B cell (primary cell): ENCODE measurements at regions of chr11 and their contacts with region 1.

Region 1: GRCh38 chr11:65013692-65014145 is 241 bp upstream of the ARL2 start:
- DNase-seq: peak; percentile 96
- ATAC-seq: peak; percentile 80
- H3K4me3 ChIP-seq: peak overlapping the region; percentile 17 to 92 (median 83)
- H3K4me3 Mint-ChIP-seq: peak overlapping the region; percentile 92
- H3K27ac ChIP-seq: peak overlapping the region; percentile 93 to 98
- H3K27ac Mint-ChIP-seq: peak overlapping the region; percentile 98
- H3K4me1 ChIP-seq: peaks cover 9 to 35% of the 10 kb centered on the region in 2 donors
- H3K4me1 Mint-ChIP-seq: peaks cover 23% of the 10 kb centered on the region
- H3K27me3 ChIP-seq: no peaks in the 10 kb centered on the region
- H3K27me3 Mint-ChIP-seq: no peaks in the 10 kb centered on the region
- CTCF ChIP-seq: no peak

Region 2: DNA sequence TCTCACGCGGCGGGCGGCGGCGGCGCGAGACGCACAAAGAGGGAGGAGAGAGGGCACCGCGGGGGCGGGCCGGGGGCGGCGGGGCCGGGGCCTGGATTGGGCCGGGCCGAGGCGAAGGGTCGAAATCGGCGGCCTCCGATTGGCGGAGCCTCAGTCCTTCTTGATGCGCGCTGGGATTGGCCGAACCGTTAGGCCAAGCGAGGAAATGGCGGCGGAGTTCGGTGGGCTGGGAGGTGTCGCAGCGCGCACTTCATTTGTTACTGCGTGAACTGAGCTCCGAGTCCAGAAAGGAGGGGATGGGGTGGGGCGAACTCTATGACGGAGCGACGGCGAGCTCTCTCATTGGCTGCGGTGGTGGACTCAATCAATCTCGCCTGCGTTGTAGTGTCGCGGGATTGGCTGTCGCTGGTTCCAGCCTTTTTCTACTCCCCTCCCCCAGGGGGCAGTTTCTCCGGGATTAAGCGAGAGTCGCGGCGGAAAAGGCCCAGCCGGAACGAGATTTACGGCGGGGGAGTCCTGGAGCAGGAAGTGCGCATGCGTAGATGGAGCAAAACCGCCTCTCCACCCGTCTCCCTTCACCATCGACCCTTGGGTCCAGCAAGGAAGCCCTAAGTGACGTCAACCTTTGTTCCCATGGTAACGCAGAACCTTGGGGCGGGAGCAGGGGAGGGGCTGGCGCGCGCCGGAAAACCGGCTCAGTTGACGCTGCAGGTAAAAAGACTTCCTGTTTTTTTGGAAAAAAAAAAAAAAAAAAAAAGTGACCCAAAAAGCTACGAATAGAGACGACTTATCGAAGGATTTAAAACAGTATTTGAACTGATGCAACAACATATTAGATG is 235.0 kb before region 1 on chr11 and contains the start of gene SF1:
- CTCF ChIA-PET with region 1: no interaction called
- POLR2A ChIA-PET with region 1: no interaction called
- intact Hi-C with region 1: loop called (anchors 5 kb)
- DNase-seq: peak; percentile 100
- ATAC-seq: peak; percentile 82
- H3K4me3 ChIP-seq: peak within 1 kb of the TSS; percentile 79 to 92 (median 82)
- H3K4me3 Mint-ChIP-seq: peak within 1 kb of the TSS; percentile 95
- H3K27ac ChIP-seq: peak within 1 kb of the TSS; percentile 95 to 98
- H3K27ac Mint-ChIP-seq: peak within 1 kb of the TSS; percentile 99
- H3K4me1 ChIP-seq: peaks cover 60 to 71% of the 10 kb centered on the region in 2 donors
- H3K4me1 Mint-ChIP-seq: peaks cover 73% of the 10 kb centered on the region
- H3K27me3 ChIP-seq: no peaks in the 10 kb centered on the region
- H3K27me3 Mint-ChIP-seq: no peaks in the 10 kb centered on the region
- CTCF ChIP-seq: no peak
- total RNA-seq, gene SF1: 914 and 931 TPM in 2 replicates

Region 3: GRCh38 chr11:64856382-64857227 is 157.1 kb before region 1 on chr11:
- CTCF ChIA-PET with region 1: no interaction called
- POLR2A ChIA-PET with region 1: no interaction called
- intact Hi-C with region 1: no loop called
- DNase-seq: peak; percentile 38
- ATAC-seq: no peak
- H3K4me3 ChIP-seq: no peak overlapping the region
- H3K4me3 Mint-ChIP-seq: peak overlapping the region; percentile 45
- H3K27ac ChIP-seq: peak overlapping the region; percentile 32 to 100
- H3K27ac Mint-ChIP-seq: peak overlapping the region; percentile 65
- H3K4me1 ChIP-seq: peaks cover 98 to 100% of the 10 kb centered on the region in 2 donors
- H3K4me1 Mint-ChIP-seq: peaks cover 86% of the 10 kb centered on the region
- H3K27me3 ChIP-seq: no peaks in the 10 kb centered on the region
- H3K27me3 Mint-ChIP-seq: no peaks in the 10 kb centered on the region
- CTCF ChIP-seq: no peak

Region 4: GRCh38 chr11:64924102-64924851 is 89.4 kb before region 1 on chr11 and contains the start of gene PPP2R5B:
- CTCF ChIA-PET with region 1: interaction called, 3 read pairs
- POLR2A ChIA-PET with region 1: interaction called, 3 read pairs
- intact Hi-C with region 1: loop called (anchors 1 kb)
- DNase-seq: peak; percentile 92
- ATAC-seq: peak; percentile 94
- H3K4me3 ChIP-seq: peak within 1 kb of the TSS; percentile 58 to 76 (median 69)
- H3K4me3 Mint-ChIP-seq: peak within 1 kb of the TSS; percentile 97
- H3K27ac ChIP-seq: peak within 1 kb of the TSS; percentile 69 to 81
- H3K27ac Mint-ChIP-seq: peak within 1 kb of the TSS; percentile 97
- H3K4me1 ChIP-seq: peaks cover 14 to 33% of the 10 kb centered on the region in 2 donors
- H3K4me1 Mint-ChIP-seq: peaks cover 22% of the 10 kb centered on the region
- H3K27me3 ChIP-seq: no peaks in the 10 kb centered on the region
- H3K27me3 Mint-ChIP-seq: no peaks in the 10 kb centered on the region
- CTCF ChIP-seq: no peak
- total RNA-seq, gene PPP2R5B: 22.6 and 24.2 TPM in 2 replicates

Region 5: DNA sequence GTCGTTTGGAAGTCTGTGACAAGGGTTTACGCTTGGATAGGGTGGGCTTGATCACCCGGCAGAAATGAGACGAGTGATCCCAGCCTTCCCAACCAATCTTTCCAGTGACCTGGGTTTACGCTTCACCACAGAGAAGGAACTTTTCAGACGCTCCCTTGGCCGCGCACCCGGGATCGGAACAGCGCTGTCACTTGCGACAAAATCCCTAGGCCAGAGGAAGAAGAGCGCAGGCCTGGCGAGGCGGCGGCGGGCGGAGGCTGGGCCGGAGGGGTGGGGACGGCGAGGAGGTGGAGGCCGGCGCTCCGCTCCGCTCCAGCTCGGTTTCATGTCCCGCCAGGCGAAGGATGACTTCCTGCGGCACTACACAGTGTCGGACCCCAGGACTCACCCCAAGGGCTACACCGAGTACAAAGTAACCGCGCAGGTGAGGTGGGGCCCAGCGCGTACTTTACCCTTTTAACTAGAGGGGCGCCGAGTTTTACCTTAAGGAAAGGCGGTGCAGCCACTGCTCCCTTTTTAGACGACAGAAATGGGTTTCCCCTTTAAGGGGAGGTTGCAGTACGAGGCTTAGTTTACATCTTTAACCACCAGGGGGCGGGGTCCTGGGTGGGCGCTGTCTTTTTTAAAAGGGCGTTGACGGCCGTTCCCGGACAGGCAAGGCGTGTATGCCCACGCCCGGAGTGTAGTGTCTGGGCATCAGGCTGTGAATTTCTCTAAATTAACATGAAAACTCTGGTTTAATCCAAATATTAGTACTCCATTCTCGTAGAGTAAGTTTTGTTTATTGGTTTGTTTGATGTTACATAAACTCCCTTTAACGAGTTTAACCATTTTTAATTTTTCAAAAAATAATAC is 13.7 kb after region 1 on chr11 and contains the start of gene SNX15:
- CTCF ChIA-PET with region 1: interaction called, 36 read pairs
- POLR2A ChIA-PET with region 1: interaction called, 3 read pairs
- intact Hi-C with region 1: loop called (anchors 1 kb)
- DNase-seq: peak; percentile 96
- ATAC-seq: peak; percentile 88
- H3K4me3 ChIP-seq: peak within 1 kb of the TSS; percentile 43 to 63 (median 53)
- H3K4me3 Mint-ChIP-seq: peak within 1 kb of the TSS; percentile 93
- H3K27ac ChIP-seq: peak within 1 kb of the TSS; percentile 55 to 73
- H3K27ac Mint-ChIP-seq: peak within 1 kb of the TSS; percentile 93
- H3K4me1 ChIP-seq: peaks cover 11 to 19% of the 10 kb centered on the region in 2 donors
- H3K4me1 Mint-ChIP-seq: peaks cover 17% of the 10 kb centered on the region
- H3K27me3 ChIP-seq: no peaks in the 10 kb centered on the region
- H3K27me3 Mint-ChIP-seq: no peaks in the 10 kb centered on the region
- CTCF ChIP-seq: peak; percentile 90
- total RNA-seq, gene SNX15: 28.5 and 30.4 TPM in 2 replicates

Region 6: GRCh38 chr11:65083834-65084597 is 70.3 kb after region 1 on chr11 and contains the starts of genes CDCA5 and ZFPL1:
- CTCF ChIA-PET with region 1: no interaction called
- POLR2A ChIA-PET with region 1: no interaction called
- intact Hi-C with region 1: loop called (anchors 1 kb)
- DNase-seq: peak; percentile 98
- ATAC-seq: peak; percentile 87
- H3K4me3 ChIP-seq: peak within 1 kb of the TSS; percentile 61 to 81 (median 76)
- H3K4me3 Mint-ChIP-seq: peak within 1 kb of the TSS; percentile 98
- H3K27ac ChIP-seq: peak within 1 kb of the TSS; percentile 91 to 94
- H3K27ac Mint-ChIP-seq: peak within 1 kb of the TSS; percentile 100
- H3K4me1 ChIP-seq: peaks cover 12 to 19% of the 10 kb centered on the region in 2 donors
- H3K4me1 Mint-ChIP-seq: peaks cover 28% of the 10 kb centered on the region
- H3K27me3 ChIP-seq: no peaks in the 10 kb centered on the region
- H3K27me3 Mint-ChIP-seq: no peaks in the 10 kb centered on the region
- CTCF ChIP-seq: no peak
- total RNA-seq, gene CDCA5: 0.78 and 1.4 TPM in 2 replicates
- total RNA-seq, gene ZFPL1: 47.9 and 57.3 TPM in 2 replicates

Region 7: GRCh38 chr11:65117216-65118096 is 103.7 kb after region 1 on chr11 and contains the start of gene ZNHIT2:
- CTCF ChIA-PET with region 1: interaction called, 21 read pairs
- POLR2A ChIA-PET with region 1: interaction called, 4 read pairs
- intact Hi-C with region 1: no loop called
- DNase-seq: peak; percentile 100
- ATAC-seq: peak; percentile 74
- H3K4me3 ChIP-seq: peak within 1 kb of the TSS; percentile 0 to 80 (median 80)
- H3K4me3 Mint-ChIP-seq: peak within 1 kb of the TSS; percentile 91
- H3K27ac ChIP-seq: peak within 1 kb of the TSS; percentile 69 to 96
- H3K27ac Mint-ChIP-seq: peak within 1 kb of the TSS; percentile 91
- H3K4me1 ChIP-seq: peaks cover 38 to 60% of the 10 kb centered on the region in 2 donors
- H3K4me1 Mint-ChIP-seq: peaks cover 71% of the 10 kb centered on the region
- H3K27me3 ChIP-seq: no peaks in the 10 kb centered on the region
- H3K27me3 Mint-ChIP-seq: no peaks in the 10 kb centered on the region
- CTCF ChIP-seq: peak; percentile 92
- total RNA-seq, gene ZNHIT2: 14.1 and 14.5 TPM in 2 replicates

Region 8: DNA sequence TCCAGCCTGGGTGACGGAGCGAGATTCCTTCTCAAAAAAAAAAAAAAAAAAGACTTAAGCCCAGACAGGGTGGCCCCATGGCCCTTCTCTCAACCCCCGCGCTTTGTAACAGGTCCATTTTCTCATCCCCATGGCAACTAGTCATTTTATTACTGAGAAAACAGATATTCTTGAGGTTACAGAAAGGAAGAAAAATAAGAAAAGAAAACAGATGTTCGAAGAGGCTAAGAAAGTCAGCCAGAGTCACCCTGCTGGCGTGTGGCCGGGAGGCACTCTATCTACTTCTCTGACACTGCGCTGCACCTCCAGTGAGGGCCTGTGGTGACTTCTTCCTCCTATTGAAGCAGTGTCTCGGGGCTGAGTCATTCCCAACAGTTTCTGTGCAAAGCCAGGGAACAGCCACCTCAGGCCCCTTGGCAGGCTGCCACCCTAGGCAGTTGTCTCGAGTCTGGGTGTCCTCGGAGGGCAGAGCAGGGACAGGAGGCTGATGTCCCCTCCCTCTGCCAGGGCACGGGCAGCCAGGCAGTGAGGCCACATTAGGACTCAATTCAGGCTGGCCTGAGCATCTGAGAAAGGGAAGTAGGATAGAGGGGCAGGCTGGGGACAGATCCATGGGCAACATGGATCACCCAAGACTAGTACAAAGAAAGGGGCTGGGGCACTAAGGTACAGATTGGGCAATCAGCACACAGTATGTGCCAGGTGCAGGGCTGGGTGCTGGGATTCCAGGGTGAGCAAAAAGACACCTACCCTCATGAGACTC is 137.0 kb after region 1 on chr11:
- CTCF ChIA-PET with region 1: no interaction called
- POLR2A ChIA-PET with region 1: no interaction called
- intact Hi-C with region 1: no loop called
- DNase-seq: peak; percentile 16
- ATAC-seq: no peak
- H3K4me3 ChIP-seq: no peak overlapping the region
- H3K4me3 Mint-ChIP-seq: peak overlapping the region; percentile 38
- H3K27ac ChIP-seq: no peak overlapping the region
- H3K27ac Mint-ChIP-seq: peak overlapping the region; percentile 15
- H3K4me1 ChIP-seq: peaks cover 21 to 24% of the 10 kb centered on the region in 2 donors
- H3K4me1 Mint-ChIP-seq: peaks cover 35% of the 10 kb centered on the region
- H3K27me3 ChIP-seq: no peaks in the 10 kb centered on the region
- H3K27me3 Mint-ChIP-seq: no peaks in the 10 kb centered on the region
- CTCF ChIP-seq: no peak

Region 9: GRCh38 chr11:65314501-65315203 is 300.9 kb after region 1 on chr11 and contains the start of gene CDC42EP2:
- CTCF ChIA-PET with region 1: interaction called, 10 read pairs
- POLR2A ChIA-PET with region 1: no interaction called
- intact Hi-C with region 1: no loop called
- DNase-seq: peak; percentile 85
- ATAC-seq: peak; percentile 96
- H3K4me3 ChIP-seq: peak within 1 kb of the TSS; percentile 40 to 85 (median 81)
- H3K4me3 Mint-ChIP-seq: peak within 1 kb of the TSS; percentile 84
- H3K27ac ChIP-seq: peak within 1 kb of the TSS in 1 of 2 donors; percentile 51
- H3K27ac Mint-ChIP-seq: no peak within 1 kb of the TSS
- H3K4me1 ChIP-seq: peaks cover 8 to 17% of the 10 kb centered on the region in 2 donors
- H3K4me1 Mint-ChIP-seq: peaks cover 10% of the 10 kb centered on the region
- H3K27me3 ChIP-seq: peaks cover 0 to 12% (median 5%) of the 10 kb centered on the region in 4 experiments
- H3K27me3 Mint-ChIP-seq: peaks cover 9% of the 10 kb centered on the region
- CTCF ChIP-seq: no peak
- total RNA-seq, gene CDC42EP2: 1.1 and 1.5 TPM in 2 replicates